ENCODE measurements at regions of chr11 and their contacts with region 1.

Region 1: DNA sequence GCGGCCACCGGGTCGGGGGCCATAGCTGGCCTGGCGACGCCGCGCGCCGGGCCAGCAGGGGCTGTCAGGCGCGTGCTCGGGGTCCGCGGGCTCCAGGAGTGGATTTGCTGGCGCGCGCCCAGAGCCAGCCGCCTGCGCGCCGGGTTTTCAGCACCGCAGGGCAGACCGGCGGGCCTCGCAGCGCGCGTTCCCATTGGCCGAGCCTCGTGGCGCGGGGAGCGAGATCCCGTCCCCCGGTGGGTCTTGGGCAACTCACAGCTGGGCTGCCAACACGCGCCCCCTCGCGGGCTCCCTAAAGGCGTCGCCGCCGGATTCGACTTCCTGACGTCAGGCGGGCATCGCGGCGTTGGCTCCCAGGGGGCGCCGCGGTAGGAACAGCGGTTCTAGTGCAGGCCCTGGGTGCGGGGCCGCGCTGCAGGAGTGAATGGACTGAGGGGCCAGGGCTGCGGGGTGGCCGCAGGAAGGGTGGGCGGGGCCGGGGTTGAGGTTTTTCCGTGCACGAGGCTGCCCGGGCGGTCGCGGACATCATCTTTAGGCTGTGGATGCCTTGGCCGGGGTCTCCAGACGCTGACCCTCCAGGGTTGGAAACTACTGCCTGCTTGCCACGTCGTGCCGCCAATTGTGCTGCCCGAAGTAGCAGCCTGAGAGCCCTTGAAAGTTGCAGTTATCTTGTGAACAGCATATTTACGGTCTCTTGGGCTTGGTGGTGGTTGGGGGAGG is at the start of gene FADS1:
- DNase-seq: peak; percentile 73
- H3K4me3 ChIP-seq: peak within 1 kb of the TSS; percentile 52 to 66 (median 64)
- H3K27ac ChIP-seq: peak within 1 kb of the TSS; percentile 68
- H3K4me1 ChIP-seq: peaks cover 50% of the 10 kb centered on the region
- H3K27me3 ChIP-seq: no peaks in the 10 kb centered on the region
- CTCF ChIP-seq: peak; percentile 20 to 60
- total RNA-seq, gene FADS1: 32.9 to 38.8 TPM

Region 2: GRCh38 chr11:61733120-61733978 is 83.5 kb before region 1 on chr11:
- CTCF ChIA-PET with region 1: no interaction called
- dilution Hi-C with region 1: no loop called
- in situ Hi-C with region 1: no loop called
- intact Hi-C with region 1: no loop called
- DNase-seq: peak; percentile 70
- H3K4me3 ChIP-seq: no peak overlapping the region
- H3K27ac ChIP-seq: no peak overlapping the region
- H3K4me1 ChIP-seq: peaks cover 27% of the 10 kb centered on the region
- H3K27me3 ChIP-seq: no peaks in the 10 kb centered on the region
- CTCF ChIP-seq: peak; percentile 99 to 100

Region 3: DNA sequence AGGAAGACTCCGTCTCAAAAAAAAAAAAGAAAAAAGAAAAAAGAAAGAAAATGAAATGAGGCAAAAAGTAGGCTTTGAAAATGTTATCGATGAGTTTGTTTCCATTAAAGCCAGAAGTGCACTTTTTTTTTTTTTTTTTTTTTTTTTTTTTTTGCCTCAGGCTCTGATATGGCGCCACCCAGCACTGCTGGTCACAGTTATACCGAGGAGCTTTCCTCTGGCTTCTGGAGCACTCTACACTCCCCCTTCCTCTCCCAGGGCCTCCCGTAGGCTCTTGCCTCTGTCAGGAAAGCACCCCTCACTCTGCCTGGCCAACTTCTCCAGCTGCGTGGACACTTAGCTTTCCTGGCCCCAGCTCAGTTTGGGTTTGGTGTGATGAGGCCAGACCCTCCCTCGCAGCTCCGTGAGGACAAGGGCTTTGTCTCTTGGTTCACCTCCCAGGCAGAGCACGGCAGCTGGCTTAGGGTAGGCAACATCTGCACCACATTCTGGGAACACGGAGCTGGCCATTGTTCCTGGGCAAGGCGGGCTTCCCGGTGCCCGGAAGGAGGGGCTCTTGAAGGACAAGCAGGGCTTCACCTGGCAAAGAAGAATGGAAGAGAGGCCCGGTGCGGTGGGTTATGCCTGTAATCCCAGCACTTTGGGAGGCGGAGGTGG is 28.1 kb after region 1 on chr11:
- CTCF ChIA-PET with region 1: no interaction called
- dilution Hi-C with region 1: loop called (anchors 5 kb)
- in situ Hi-C with region 1: no loop called
- intact Hi-C with region 1: no loop called
- DNase-seq: no peak
- H3K4me3 ChIP-seq: no peak overlapping the region
- H3K27ac ChIP-seq: no peak overlapping the region
- H3K4me1 ChIP-seq: no peaks in the 10 kb centered on the region
- H3K27me3 ChIP-seq: no peaks in the 10 kb centered on the region
- CTCF ChIP-seq: no peak

Region 4: DNA sequence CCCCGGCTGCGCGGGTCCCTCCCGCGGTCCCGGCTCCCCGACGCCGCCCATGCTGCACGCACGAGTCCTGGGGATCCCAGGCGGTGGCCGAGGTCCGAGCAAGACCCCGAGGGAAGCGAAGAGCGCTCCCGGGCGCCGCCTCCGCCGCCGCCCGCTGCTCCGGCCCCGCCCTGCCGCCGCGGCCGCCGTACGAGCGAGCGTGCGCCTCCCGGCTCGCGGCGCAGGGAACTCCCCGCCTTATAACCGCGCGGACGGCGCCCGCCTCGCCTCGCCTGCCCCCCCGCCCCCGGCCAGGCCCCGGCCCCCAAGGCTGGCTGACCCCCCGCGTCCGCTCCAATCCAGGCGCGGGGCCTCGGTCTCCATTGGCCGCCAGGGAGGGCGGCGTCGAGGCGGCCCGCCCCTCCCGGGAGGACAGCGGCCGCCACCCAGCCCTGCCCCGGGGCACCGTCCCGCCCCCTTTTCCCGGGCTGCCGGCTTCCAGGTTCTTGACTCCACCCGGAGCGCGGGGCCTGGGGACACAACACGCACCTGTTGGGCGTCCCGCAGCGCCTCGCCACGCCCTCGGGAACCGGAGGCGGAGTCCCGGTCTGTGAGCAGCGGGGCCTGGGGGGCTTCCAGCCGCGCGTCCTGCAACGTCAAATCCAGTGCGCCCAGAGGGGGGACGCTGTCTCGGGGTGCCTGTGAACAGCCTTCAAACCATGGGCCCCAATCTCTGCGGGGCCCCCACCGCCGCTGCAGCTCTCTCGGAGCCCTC is 74.6 kb after region 1 on chr11 and contains the start of gene FADS3:
- CTCF ChIA-PET with region 1: no interaction called
- dilution Hi-C with region 1: no loop called
- in situ Hi-C with region 1: no loop called
- intact Hi-C with region 1: loop called (anchors 5 kb)
- DNase-seq: peak; percentile 80
- H3K4me3 ChIP-seq: peak within 1 kb of the TSS; percentile 63 to 100 (median 75)
- H3K27ac ChIP-seq: no peak within 1 kb of the TSS
- H3K4me1 ChIP-seq: peaks cover 30% of the 10 kb centered on the region
- H3K27me3 ChIP-seq: no peaks in the 10 kb centered on the region
- CTCF ChIP-seq: no peak
- total RNA-seq, gene FADS3: 149 to 429 TPM